ENCODE measurements at regions of chr11 and their contacts with region 1.

Region 1: DNA sequence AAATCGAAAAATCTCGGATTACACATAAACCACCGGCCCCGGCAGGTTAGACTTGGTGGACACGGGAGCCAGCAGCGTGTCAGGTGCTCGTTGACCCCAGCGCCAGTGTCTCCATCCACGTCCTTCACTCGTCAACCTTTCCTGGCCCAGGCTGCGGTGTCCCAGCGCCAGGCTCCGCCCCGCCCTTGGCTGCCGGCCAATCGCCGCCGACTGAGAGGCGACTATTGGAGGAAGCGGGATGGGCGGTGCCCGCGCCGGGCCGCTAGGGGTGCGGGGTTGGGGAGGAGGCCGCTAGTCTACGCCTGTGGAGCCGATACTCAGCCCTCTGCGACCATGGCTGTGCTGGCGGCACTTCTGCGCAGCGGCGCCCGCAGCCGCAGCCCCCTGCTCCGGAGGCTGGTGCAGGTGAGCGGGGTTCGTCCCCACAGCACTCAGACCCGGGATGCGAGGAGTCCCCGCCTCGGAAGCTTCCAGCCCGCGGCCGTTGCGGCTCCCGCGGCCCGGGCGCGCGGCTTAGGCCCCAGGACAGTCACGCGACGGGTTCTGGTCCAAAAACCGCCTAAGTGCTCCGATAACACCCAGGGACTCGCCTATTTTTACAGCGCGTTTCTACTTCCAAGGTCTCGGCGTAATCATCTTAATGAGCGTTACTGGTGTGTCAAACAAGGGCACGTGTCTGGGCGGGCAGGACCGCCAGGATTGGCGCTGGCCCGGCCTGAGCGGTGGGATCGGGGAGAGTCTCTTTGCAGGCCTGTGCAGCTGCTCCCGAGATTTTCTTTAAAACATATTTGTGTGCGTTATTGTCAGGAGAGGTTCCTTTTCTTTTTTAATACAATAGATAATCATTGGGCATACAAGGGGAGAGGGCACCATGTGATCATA is at the start of gene ACAT1:
- DNase-seq: peak; percentile 95
- H3K4me3 Mint-ChIP-seq: peak within 1 kb of the TSS; percentile 83
- H3K27ac Mint-ChIP-seq: peak within 1 kb of the TSS; percentile 91
- H3K4me1 Mint-ChIP-seq: peaks cover 38% of the 10 kb centered on the region
- H3K27me3 Mint-ChIP-seq: no peaks in the 10 kb centered on the region
- CTCF ChIP-seq: peak; percentile 7
- total RNA-seq, gene ACAT1: 75.5 and 86.8 TPM in 2 replicates

Region 2: DNA sequence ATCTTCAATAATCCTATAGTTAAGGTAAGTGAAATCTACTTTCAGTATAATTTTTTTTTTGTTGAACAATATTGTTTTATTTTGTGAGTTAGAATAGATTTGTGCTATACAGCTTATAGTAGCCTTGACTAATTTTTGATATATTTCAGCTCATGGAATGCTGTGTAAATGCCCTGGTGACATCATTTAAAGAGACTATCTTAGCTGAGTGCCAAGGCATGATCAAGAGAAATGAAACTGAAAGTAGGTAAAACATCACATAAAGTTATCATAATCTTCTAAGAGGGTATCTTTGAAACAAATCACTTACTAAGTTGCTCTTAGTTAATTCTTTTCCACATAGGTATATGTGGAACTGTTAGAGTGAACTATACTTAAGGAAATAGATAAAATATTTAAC is 51.6 kb before region 1 on chr11:
- CTCF ChIA-PET with region 1: no interaction called
- POLR2A ChIA-PET with region 1: no interaction called
- intact Hi-C with region 1: no loop called
- DNase-seq: peak; percentile 6
- H3K4me3 Mint-ChIP-seq: no peak overlapping the region
- H3K27ac Mint-ChIP-seq: no peak overlapping the region
- H3K4me1 Mint-ChIP-seq: no peaks in the 10 kb centered on the region
- H3K27me3 Mint-ChIP-seq: no peaks in the 10 kb centered on the region
- CTCF ChIP-seq: no peak

Region 3: GRCh38 chr11:108131993-108132392 is 10.5 kb after region 1 on chr11:
- CTCF ChIA-PET with region 1: interaction called, 5 read pairs
- POLR2A ChIA-PET with region 1: interaction called, 12 read pairs
- intact Hi-C with region 1: no loop called
- DNase-seq: no peak
- H3K4me3 Mint-ChIP-seq: no peak overlapping the region
- H3K27ac Mint-ChIP-seq: no peak overlapping the region
- H3K4me1 Mint-ChIP-seq: no peaks in the 10 kb centered on the region
- H3K27me3 Mint-ChIP-seq: no peaks in the 10 kb centered on the region
- CTCF ChIP-seq: no peak

Measured in MCF 10A (cell line).